ENCODE measurements at regions of chr20 and their contacts with region 1.

Region 1: DNA sequence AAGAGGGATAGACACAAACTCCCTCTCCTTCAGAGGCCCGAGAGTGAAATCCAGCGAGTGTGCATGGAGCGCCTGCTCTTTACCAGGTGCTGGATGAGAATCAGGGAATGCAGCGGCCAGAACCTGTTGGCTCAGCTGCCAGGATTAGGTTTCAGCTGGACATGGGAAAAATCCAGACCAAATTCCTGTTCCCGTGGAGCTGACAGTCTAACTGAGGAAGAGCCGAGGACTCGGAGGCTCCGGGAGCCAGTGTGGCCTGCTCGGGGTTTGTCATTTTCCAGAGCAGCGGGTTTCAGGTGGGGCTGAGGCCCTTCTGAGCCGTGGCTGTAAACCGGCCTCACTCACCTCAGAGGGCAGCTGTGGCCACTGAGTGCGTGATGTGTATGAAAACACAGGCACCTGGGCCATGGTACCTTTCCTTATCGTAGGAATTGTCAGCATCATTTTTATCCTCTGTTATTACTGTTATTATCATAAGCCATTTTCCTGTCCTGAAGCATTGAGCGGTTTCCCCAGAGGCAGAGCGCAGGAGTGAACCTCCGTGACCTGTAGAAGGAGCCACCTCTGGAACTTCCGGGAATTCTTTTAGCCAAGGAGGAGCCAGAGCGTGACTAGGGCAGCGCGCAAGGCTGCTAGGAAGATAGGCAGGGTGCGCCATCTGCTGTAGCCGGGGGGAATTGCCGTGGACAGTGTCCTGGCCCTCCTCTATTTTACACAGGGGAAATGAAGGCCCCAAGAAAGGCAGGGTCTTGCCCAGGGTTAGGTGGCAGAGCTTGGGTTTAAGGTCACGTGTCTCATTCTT is 27.3 kb downstream of the PKIG start:
- DNase-seq: peak; percentile 91

Region 2: GRCh38 chr20:44210422-44211176 is 399.1 kb before region 1 on chr20 and contains the start of gene OSER1:
- intact Hi-C with region 1: loop called (anchors 5 kb)
- DNase-seq: peak; percentile 99
- total RNA-seq, gene OSER1: 28.4 TPM

Region 3: GRCh38 chr20:44388466-44389023 is 221.2 kb before region 1 on chr20:
- intact Hi-C with region 1: loop called (anchors 2 kb)
- DNase-seq: peak; percentile 82

Region 4: GRCh38 chr20:44475694-44476560 is 133.8 kb before region 1 on chr20 and contains the start of gene TTPAL:
- intact Hi-C with region 1: loop called (anchors 5 kb)
- DNase-seq: peak; percentile 95
- total RNA-seq, gene TTPAL: 5.3 TPM

Region 5: GRCh38 chr20:44532259-44532980 is 77.3 kb before region 1 on chr20:
- intact Hi-C with region 1: loop called (anchors 2 kb)
- DNase-seq: no peak

Region 6: DNA sequence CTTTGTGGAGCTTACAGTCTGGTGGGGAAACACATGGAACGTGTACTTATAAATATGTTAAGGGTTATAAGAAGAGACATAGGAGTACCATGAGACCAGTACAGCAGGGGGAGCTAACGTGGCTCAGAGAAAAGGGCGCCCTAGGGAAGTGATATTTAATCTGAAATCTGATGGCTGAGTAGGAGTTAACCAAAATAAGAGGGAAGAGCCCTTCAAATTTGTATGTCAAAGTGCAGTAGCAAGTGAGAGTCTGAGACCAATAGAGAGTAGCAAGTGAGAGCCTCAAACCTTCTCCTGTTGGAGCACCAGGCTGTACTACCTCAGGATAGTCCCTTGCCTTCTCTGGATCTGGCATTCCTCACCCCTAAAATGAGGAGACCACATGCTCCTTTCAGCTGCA is 33.4 kb before region 1 on chr20:
- intact Hi-C with region 1: loop called (anchors 2 kb)
- DNase-seq: no peak

Region 7: DNA sequence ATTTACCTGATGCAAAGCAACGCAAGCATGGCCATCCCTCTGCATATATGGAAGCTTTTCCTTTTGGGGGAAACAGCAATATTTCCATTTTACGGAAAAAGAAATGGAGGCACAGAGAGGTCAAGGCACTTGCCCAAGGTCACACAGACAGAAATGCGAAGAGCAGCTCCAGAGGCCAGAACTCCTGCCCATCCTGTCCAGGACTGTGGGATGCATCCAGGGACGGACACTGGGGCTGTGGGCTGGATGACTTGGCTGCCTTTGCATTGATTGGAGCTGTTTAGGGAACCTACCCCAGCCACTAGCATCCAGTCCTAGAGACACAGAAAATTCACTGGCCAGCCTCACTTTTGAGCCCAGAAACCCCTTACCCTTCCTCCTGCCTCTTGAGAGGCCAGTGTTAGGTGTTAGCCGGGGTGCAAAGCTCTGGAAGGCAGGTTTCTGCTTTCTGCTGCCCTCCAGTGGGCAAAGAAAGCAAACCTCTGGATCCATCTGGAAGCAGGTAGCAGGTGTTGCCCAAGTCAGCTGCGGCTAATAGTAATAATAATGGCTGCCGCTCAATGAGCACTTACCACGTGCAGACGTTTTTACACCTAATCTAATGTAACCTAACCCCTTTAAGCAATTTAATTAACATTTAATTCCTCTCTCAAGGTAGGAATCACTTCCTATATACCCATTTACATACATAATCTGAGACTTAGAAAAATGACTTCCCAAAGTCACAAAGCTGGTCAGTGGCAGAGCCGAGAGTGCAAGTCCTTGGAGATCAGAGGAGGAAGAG is 73.7 kb after region 1 on chr20:
- intact Hi-C with region 1: loop called (anchors 10 kb)
- DNase-seq: no peak

Region 8: DNA sequence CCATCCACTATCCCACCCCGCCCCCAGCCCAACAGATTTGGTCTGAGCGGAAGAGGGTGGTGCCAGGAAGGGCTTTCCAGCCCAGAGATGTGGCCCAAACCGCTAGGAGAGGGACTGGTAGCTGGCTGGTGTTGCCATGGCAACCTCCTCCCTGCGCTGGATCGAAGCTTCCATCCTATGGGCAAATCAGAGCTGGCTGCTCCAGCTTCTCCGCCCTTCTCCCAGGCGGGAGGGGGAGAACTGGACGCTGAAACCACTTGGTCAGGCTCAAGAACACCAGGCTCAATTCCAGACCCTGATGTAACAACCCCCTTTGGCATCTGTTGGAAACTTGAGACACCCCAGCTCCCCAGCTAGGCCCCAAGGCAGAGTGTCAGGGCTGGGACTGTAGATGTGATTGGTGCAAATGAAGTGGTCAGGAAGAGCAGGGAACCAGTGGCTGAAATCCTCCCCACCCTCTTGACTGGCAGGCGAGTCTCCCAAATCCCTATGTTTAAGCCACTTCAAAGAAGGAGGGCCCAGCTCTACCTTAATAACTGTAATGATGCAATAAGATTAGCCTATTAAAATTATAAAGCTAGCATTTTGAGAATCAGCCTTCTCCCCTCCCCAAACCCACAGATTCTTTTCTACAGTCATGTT is 196.4 kb after region 1 on chr20:
- intact Hi-C with region 1: no loop called
- DNase-seq: no peak